Gastrocnemius medialis (tissue), 4 donors: ENCODE measurements at regions of chr15 and their contacts with region 1.

Region 1: DNA sequence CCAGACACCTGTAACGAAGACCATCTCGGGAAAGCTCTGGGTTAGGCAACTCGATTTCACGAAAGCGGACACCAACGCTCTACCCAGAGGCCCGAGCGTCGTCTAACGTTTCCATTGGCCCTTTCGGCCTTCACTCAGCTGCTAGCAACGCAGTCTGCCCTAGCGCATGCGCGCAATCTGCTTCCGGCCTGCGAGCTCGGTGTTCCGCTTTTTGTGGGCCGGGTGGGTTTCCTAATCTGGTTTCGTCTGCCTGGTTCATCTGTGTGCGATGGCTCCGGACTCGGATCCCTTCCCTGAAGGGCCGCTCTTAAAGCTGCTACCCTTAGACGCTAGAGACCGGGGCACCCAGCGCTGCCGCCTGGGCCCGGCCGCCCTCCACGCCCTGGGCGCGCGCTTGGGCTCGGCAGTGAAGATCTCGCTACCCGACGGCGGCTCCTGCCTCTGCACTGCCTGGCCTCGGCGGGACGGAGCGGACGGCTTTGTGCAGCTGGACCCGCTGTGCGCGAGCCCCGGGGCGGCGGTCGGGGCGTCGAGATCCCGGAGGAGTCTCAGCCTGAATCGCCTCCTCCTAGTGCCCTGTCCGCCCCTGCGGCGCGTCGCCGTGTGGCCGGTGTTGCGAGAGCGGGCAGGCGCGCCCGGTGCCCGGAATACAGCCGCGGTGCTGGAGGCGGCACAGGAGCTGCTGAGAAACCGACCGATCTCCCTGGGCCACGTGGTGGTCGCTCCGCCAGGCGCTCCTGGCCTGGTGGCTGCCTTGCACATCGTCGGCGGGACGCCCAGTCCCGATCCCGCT is 24.0 kb upstream of the GATM start:
- DNase-seq: peak; percentile 95 to 97
- ATAC-seq: peak; percentile 98
- H3K4me3 ChIP-seq: peak overlapping the region; percentile 86 to 95 (median 92)
- H3K27ac ChIP-seq: peak overlapping the region; percentile 89 to 97 (median 94)
- H3K4me1 ChIP-seq: peaks cover 20 to 30% of the 10 kb centered on the region in 2 donors
- H3K27me3 ChIP-seq: no peaks in the 10 kb centered on the region
- CTCF ChIP-seq: no peak
- POLR2A ChIP-seq: peak; percentile 67 to 76

Region 2: DNA sequence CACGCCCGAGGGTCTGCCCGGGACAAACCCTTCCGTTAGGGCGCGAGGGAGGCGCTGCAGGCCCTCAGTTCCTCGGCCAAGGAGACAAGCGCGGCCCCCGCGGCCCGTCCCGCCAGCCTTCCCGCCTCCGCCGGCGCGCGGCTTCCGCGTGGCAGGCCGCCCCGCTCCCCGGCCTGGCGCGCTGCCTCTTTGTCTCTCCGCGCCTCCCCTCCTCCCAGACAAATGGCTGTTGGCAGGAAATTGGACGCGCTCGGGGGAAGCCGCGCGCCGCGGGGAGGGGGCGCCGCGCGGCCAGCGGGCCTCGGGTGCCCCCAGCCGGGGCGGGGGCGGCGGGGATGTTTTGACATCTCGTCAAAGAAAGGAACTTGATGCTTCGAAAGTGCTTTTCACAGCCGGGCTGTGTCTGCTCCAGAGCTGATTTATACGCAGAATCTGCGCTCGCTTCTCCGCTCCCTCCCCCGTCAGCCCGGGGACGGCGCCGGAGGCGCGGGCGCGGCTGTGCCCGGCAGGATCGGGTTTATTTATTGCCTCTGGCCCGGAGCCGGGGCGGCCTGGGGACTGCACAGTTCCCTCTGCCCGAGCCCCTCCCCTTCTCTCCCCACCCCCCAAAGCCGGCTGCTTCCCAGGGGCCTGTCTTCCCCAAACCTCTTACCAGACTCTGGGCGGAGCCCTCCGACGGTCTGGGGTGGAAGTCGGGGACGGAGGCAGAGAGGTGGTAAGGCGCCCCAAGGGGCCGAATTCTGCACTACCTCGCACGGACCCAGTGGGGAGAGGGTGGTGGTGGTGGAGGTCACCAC is 235.3 kb before region 1 on chr15:
- in situ Hi-C with region 1: loop called in 3 of 4 experiments (anchors 10 to 25 kb)
- intact Hi-C with region 1: loop called (anchors 1 kb)
- DNase-seq: peak; percentile 64 to 78
- ATAC-seq: peak; percentile 78 to 82
- H3K4me3 ChIP-seq: peak overlapping the region; percentile 66 to 77 (median 75)
- H3K27ac ChIP-seq: peak overlapping the region; percentile 84 to 92 (median 89)
- H3K4me1 ChIP-seq: peaks cover 0 to 4% of the 10 kb centered on the region in 2 donors
- H3K27me3 ChIP-seq: no peaks in the 10 kb centered on the region
- CTCF ChIP-seq: peak; percentile 26 to 59 (median 51)
- POLR2A ChIP-seq: peak; percentile 14 to 20

Region 3: GRCh38 chr15:45287390-45287956 is 114.9 kb before region 1 on chr15:
- in situ Hi-C with region 1: loop called in 1 of 4 experiments (anchors 10 kb)
- intact Hi-C with region 1: no loop called
- DNase-seq: no peak
- ATAC-seq: no peak
- H3K4me3 ChIP-seq: no peak overlapping the region
- H3K27ac ChIP-seq: no peak overlapping the region
- H3K4me1 ChIP-seq: peaks cover 6 to 19% of the 10 kb centered on the region in 2 donors
- H3K27me3 ChIP-seq: no peaks in the 10 kb centered on the region
- CTCF ChIP-seq: no peak
- POLR2A ChIP-seq: no peak

Region 4: DNA sequence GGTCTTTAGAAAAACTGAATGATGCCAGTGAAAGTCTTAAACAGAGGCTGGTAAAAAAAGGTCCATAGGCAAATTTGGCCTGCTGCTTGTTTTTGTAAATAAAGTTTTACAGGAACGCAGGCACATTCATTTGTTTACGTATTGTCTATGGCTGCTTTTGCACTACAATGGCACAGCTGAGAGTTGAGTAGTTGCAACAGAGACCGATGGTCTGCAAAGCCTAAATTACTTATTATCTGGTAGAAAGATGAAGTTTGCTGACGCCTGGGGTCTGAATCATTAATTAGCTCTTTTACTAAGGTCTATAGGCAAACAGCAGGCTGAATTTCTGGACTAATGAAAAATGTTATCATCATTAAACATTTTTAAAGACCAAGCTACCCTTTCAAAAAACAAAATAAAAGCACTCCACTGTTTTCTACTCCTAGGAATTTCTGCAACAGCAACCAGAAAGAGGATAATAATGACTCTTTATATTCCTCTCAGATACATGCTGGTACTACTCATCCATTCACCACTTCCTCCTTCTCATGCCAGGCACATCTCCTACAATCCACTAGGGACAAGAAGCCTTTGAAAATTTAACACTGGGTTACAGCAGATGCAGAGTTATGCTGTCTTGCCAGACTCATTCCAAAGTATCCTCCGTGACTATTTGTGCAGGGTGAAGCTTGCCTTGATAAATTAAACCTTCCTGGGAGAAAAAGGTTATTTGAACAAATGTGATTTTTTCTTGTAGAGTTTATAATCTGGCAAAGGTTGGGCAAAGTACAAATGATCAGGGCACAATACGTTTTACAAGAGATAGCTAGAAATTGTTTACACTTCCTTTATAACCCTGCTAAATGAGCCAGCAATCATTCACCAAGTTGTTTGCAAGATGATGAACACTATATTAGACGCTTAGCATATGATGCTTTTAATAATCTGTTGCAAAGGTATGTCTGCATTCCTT is 30.0 kb before region 1 on chr15:
- in situ Hi-C with region 1: no loop called
- intact Hi-C with region 1: loop called (anchors 5 kb)
- DNase-seq: no peak
- ATAC-seq: no peak
- H3K4me3 ChIP-seq: no peak overlapping the region
- H3K27ac ChIP-seq: no peak overlapping the region
- H3K4me1 ChIP-seq: peaks cover 10 to 28% of the 10 kb centered on the region in 2 donors
- H3K27me3 ChIP-seq: no peaks in the 10 kb centered on the region
- CTCF ChIP-seq: no peak
- POLR2A ChIP-seq: no peak

Region 5: DNA sequence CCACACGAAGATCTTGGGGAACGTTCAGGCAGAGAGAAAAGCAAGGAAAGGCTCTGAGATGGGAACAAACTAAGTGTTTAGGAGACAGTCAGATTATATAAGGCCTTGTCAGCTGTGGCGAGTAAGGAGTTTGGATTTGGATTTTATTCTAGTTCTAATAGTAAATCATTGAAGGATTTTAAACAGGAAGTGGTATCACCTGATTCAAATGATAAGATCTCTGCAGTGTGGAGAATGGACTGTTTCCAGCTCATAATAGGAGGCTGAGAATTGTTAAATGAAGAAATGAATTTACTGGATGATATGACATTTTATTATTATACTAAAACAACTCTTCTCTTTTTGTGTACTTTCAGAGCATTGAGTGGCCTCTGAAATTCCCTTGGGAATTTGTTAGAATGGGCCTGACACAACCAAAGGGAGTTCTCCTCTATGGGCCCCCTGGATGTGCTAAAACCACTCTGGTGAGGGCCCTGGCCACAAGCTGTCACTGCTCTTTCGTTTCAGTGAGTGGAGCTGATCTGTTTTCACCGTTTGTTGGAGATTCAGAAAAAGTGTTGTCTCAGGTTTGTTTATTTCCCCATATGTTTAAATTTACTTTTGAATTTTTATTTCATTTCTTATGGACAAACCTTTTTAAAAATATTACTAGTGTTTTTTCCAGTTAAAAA is 12.0 kb after region 1 on chr15:
- in situ Hi-C with region 1: no loop called
- intact Hi-C with region 1: no loop called
- DNase-seq: no peak
- ATAC-seq: no peak
- H3K4me3 ChIP-seq: no peak overlapping the region
- H3K27ac ChIP-seq: no peak overlapping the region
- H3K4me1 ChIP-seq: no peaks in the 10 kb centered on the region
- H3K27me3 ChIP-seq: no peaks in the 10 kb centered on the region
- CTCF ChIP-seq: no peak
- POLR2A ChIP-seq: no peak

Region 6: GRCh38 chr15:45457641-45458433 is 55.5 kb after region 1 on chr15:
- in situ Hi-C with region 1: no loop called
- intact Hi-C with region 1: loop called (anchors 2 kb)
- DNase-seq: peak; percentile 30 to 33
- ATAC-seq: peak; percentile 76 to 91
- H3K4me3 ChIP-seq: peak overlapping the region; percentile 50 to 75 (median 56)
- H3K27ac ChIP-seq: peak overlapping the region; percentile 74 to 82 (median 75)
- H3K4me1 ChIP-seq: no peaks in the 10 kb centered on the region
- H3K27me3 ChIP-seq: no peaks in the 10 kb centered on the region
- CTCF ChIP-seq: peak; percentile 42 to 85 (median 77)
- POLR2A ChIP-seq: no peak

Region 7: DNA sequence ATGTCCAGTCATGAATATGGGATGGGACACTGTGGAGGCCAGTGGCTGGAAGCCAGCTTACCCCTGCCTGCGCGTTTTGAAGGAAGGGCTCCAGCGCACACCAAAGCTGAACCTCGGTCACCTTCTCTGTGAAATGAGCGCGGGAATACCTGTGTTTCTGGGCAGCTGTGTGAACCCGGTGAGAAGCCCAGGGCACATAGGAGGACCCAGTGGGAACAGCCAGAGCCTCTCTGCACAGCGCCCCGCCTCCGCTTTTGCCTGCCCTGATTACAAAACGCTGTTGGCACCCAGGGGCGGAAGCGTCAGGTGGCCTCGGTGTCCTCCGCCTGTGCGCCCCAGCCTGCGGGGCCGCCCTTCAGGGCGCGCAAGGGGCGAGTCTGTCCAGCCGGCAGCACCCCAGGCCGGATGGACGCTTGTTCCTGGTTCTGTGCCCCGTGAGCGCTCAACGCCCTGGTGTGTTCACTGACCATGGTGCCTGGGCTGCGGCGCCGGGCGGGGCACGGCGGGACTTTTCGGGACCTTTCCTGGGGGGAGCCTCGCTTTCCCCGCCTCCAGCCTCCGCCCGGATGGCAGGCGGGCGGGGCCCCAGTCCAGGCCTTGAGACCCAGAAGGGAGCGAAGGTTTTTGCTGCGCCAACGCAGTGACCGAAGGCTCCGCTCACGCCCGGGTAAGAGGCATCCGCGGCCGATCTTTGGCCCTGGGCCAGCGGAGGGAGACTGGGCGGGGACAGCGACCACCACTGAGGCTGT is 232.3 kb after region 1 on chr15 and contains the start of gene SQOR:
- in situ Hi-C with region 1: no loop called
- intact Hi-C with region 1: loop called (anchors 5 kb)
- DNase-seq: peak; percentile 85 to 95
- ATAC-seq: peak; percentile 78 to 81
- H3K4me3 ChIP-seq: peak within 1 kb of the TSS; percentile 84 to 95 (median 88)
- H3K27ac ChIP-seq: peak within 1 kb of the TSS; percentile 98 to 99 (median 98)
- H3K4me1 ChIP-seq: peaks cover 34 to 35% of the 10 kb centered on the region in 2 donors
- H3K27me3 ChIP-seq: no peaks in the 10 kb centered on the region
- CTCF ChIP-seq: no peak
- POLR2A ChIP-seq: peak; percentile 91 to 93
- total RNA-seq, gene SQOR: 140 to 194 (median 164) TPM